Esophagus muscularis mucosa (tissue), 4 donors: ENCODE measurements at regions of chr9 and their contacts with region 1.

Region 1: GRCh38 chr9:127857791-127858512 is 3.5 kb upstream of the ENG start:
- DNase-seq: no peak
- H3K4me3 ChIP-seq: no peak overlapping the region
- H3K27ac ChIP-seq: peak overlapping the region in 2 of 4 donors; percentile 15 to 86
- H3K4me1 ChIP-seq: peaks cover 72 to 85% (median 79%) of the 10 kb centered on the region in 4 donors
- H3K27me3 ChIP-seq: peaks cover 0 to 8% (median 0%) of the 10 kb centered on the region in 4 donors
- CTCF ChIP-seq: no peak
- EP300 ChIP-seq: no peak
- POLR2A ChIP-seq: no peak

Region 2: GRCh38 chr9:127809512-127810377 is 48.2 kb before region 1 on chr9:
- intact Hi-C with region 1: loop called (anchors 5 kb)
- DNase-seq: no peak
- H3K4me3 ChIP-seq: no peak overlapping the region
- H3K27ac ChIP-seq: peak overlapping the region in 2 of 4 donors; percentile 30 to 53
- H3K4me1 ChIP-seq: peaks cover 5 to 38% (median 20%) of the 10 kb centered on the region in 4 donors
- H3K27me3 ChIP-seq: no peaks in the 10 kb centered on the region
- CTCF ChIP-seq: no peak
- EP300 ChIP-seq: no peak
- POLR2A ChIP-seq: no peak

Region 3: DNA sequence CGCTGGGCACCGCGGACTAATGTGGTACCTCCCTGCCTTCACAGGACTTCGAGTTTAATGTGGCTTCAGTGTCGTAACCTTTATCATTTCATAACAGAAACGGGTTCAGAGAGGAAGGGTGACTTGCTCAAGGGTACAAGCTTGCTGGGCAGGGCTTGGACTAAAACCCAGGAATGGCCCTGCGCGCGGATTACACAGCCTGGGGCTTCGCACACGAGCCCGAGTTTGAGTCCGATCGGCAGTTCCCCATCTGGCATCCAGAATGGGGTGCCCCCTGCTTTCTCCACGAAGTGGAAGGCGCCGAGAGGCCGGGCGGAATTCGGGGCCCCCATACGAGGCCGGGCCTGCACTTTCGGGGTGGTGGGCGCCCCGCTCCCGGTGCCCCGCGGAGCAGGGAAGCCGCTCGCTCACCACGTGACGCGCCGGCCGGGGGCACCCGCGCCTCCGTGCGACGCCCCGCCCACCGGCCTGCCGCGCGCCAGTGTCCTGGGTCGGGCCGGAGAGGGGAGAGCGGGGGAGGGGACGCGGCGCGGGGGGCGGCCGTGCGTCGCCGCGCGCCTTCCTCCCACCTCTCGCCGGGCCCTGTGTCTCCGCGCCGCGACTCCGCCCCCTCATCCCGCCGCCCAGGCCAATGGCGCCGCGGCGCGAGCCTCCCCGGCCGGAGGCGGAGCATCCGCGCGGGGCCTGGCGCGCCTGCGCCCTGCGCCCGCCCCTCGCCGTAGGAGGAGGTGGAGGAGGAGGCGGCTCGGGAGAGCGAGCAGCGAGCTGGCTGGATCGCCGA is 830.8 kb after region 1 on chr9 and contains the start of gene SET:
- intact Hi-C with region 1: no loop called
- DNase-seq: peak; percentile 96
- H3K4me3 ChIP-seq: peak within 1 kb of the TSS; percentile 78 to 93 (median 90)
- H3K27ac ChIP-seq: peak within 1 kb of the TSS; percentile 92 to 98 (median 97)
- H3K4me1 ChIP-seq: peaks cover 27 to 50% (median 43%) of the 10 kb centered on the region in 4 donors
- H3K27me3 ChIP-seq: no peaks in the 10 kb centered on the region
- CTCF ChIP-seq: peak in 1 of 3 experiments; percentile 20
- EP300 ChIP-seq: no peak
- POLR2A ChIP-seq: peak; percentile 36
- total RNA-seq, gene SET: 170 to 239 (median 205) TPM